ENCODE measurements at regions of chr10 and their contacts with region 1.

Region 1: GRCh38 chr10:45063591-45064231 is 63.0 kb downstream of the ZNF22 start:
- DNase-seq: no peak
- ATAC-seq: no peak
- H3K4me3 ChIP-seq: no peak overlapping the region
- H3K27ac ChIP-seq: no peak overlapping the region
- H3K4me1 ChIP-seq: no peaks in the 10 kb centered on the region
- H3K27me3 ChIP-seq: no peaks in the 10 kb centered on the region
- CTCF ChIP-seq: no peak
- POLR2A ChIP-seq: no peak

Region 2: DNA sequence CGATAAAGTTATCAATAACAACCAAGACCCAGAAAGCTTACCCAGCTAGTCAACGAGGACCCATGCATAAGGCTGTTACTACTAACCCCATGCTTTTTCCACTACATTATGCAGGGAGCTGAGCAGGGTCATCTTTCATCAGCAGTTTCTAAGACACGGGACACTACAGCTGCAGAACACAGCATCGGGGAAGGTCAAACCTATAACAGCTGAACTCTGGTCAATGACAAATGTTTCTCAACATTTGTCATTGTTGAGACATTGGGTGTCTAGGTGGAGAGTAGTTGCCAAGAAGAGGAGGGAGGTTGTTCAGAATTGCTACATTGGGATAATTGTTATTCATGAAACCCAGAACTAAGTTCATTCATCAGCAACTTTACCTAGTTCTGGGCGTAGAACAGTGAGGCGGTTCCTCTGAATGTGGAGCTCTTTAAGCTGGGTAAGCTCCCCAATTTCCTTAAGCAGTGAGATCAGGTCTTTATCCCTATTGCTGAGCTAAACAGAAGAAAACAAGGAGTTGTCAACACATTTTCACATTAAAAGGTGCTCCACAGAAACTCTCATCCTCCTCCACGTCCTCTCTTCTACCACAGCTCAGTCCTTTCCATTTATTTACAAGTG is 42.6 kb after region 1 on chr10:
- in situ Hi-C with region 1: no loop called
- intact Hi-C with region 1: no loop called
- DNase-seq: no peak
- ATAC-seq: no peak
- H3K4me3 ChIP-seq: no peak overlapping the region
- H3K27ac ChIP-seq: no peak overlapping the region
- H3K4me1 ChIP-seq: no peaks in the 10 kb centered on the region
- H3K27me3 ChIP-seq: no peaks in the 10 kb centered on the region
- CTCF ChIP-seq: no peak
- POLR2A ChIP-seq: no peak

Region 3: GRCh38 chr10:45160271-45160670 is 96.6 kb after region 1 on chr10:
- in situ Hi-C with region 1: loop called in 1 of 4 experiments (anchors 25 kb)
- intact Hi-C with region 1: no loop called
- DNase-seq: no peak
- ATAC-seq: no peak
- H3K4me3 ChIP-seq: no peak overlapping the region
- H3K27ac ChIP-seq: no peak overlapping the region
- H3K4me1 ChIP-seq: no peaks in the 10 kb centered on the region
- H3K27me3 ChIP-seq: no peaks in the 10 kb centered on the region
- CTCF ChIP-seq: no peak
- POLR2A ChIP-seq: no peak